IMR-90 (cell line): ENCODE measurements at regions of chr3 and their contacts with region 1.

Region 1: GRCh38 chr3:73086071-73086494 is 24.6 kb downstream of the EBLN2 start:
- DNase-seq: peak; percentile 43
- ATAC-seq: peak; percentile 92
- H3K4me3 ChIP-seq: no peak overlapping the region
- H3K27ac ChIP-seq: no peak overlapping the region
- H3K4me1 ChIP-seq: peaks cover 2% of the 10 kb centered on the region; the same call in 1 of the 2 replicates
- H3K27me3 ChIP-seq: peaks cover 5% of the 10 kb centered on the region; the same call in 1 of the 2 replicates
- CTCF ChIP-seq: peak; percentile 92
- POLR2A ChIP-seq: no peak
- RAD21 ChIP-seq: peak; percentile 94

Region 2: GRCh38 chr3:71710906-71711494 is 1375.1 kb before region 1 on chr3:
- CTCF ChIA-PET with region 1: no interaction called
- POLR2A ChIA-PET with region 1: no interaction called
- dilution Hi-C with region 1: no loop called
- in situ Hi-C with region 1: no loop called
- intact Hi-C with region 1: loop called (anchors 5 kb)
- DNase-seq: peak; percentile 66
- ATAC-seq: peak; percentile 92
- H3K4me3 ChIP-seq: no peak overlapping the region
- H3K27ac ChIP-seq: no peak overlapping the region
- H3K4me1 ChIP-seq: no peaks in the 10 kb centered on the region; the same call in 1 of the 2 replicates
- H3K27me3 ChIP-seq: peaks cover 19% of the 10 kb centered on the region
- CTCF ChIP-seq: peak; percentile 77
- POLR2A ChIP-seq: no peak
- RAD21 ChIP-seq: peak; percentile 76

Region 3: DNA sequence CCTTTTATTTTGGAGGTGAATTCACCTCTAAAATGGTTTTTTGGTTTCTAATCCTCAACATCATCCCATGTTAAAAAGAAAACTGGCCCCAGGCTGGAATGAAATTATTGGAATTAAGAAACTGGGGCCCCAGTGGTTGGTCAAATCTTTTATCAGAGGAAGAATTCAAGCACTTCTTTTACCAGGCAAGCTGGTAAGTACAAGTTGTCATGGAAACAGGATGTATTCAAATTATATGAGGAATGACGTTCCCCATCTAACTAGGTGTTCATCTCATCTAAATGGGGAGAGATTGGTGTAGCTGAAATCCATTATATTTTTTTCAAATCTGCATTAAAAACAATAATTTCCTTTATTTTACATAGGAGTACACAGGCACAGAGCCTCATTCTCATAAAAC is 1351.2 kb before region 1 on chr3:
- CTCF ChIA-PET with region 1: no interaction called
- POLR2A ChIA-PET with region 1: no interaction called
- dilution Hi-C with region 1: no loop called
- in situ Hi-C with region 1: no loop called
- intact Hi-C with region 1: loop called (anchors 5 kb)
- DNase-seq: no peak
- ATAC-seq: no peak
- H3K4me3 ChIP-seq: no peak overlapping the region
- H3K27ac ChIP-seq: no peak overlapping the region
- H3K4me1 ChIP-seq: no peaks in the 10 kb centered on the region
- H3K27me3 ChIP-seq: peaks cover 17% of the 10 kb centered on the region
- CTCF ChIP-seq: no peak
- POLR2A ChIP-seq: no peak
- RAD21 ChIP-seq: no peak

Region 4: DNA sequence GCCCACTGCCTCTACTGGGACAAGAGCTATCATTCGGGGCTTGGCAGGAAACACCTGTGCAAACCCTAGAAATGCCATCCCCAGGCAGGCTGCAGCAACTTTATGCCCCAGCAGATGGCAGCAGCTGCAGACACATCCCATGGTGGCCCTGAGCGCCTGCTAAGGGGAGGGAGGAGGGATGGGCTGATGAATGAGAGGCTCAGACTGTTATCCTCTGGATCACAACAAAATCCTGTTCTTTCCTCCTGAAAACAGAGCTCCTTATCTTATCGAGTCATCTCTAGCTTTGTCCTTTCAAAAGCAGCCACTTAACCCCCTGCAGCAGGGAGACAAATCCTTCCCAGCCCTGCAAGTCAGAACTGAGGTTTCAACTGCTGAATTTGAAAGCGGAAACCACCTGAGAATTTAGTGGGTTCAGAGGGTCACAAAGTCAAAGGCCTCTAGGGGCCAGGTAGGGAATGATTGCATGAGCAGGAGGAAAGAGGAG is 1210.6 kb before region 1 on chr3:
- CTCF ChIA-PET with region 1: no interaction called
- POLR2A ChIA-PET with region 1: no interaction called
- dilution Hi-C with region 1: no loop called
- in situ Hi-C with region 1: loop called (anchors 25 kb)
- intact Hi-C with region 1: loop called (anchors 1 kb)
- DNase-seq: peak; percentile 53
- ATAC-seq: peak; percentile 99
- H3K4me3 ChIP-seq: no peak overlapping the region
- H3K27ac ChIP-seq: no peak overlapping the region
- H3K4me1 ChIP-seq: no peaks in the 10 kb centered on the region
- H3K27me3 ChIP-seq: peaks cover 6% of the 10 kb centered on the region
- CTCF ChIP-seq: peak; percentile 81
- POLR2A ChIP-seq: 0 out of 2 replicates have a peak, but pooled peaks have one; percentile 27
- RAD21 ChIP-seq: peak; percentile 84

Region 5: GRCh38 chr3:71955240-71956068 is 1130.6 kb before region 1 on chr3:
- CTCF ChIA-PET with region 1: no interaction called
- POLR2A ChIA-PET with region 1: no interaction called
- dilution Hi-C with region 1: no loop called
- in situ Hi-C with region 1: no loop called
- intact Hi-C with region 1: loop called (anchors 5 kb)
- DNase-seq: peak; percentile 70
- ATAC-seq: peak; percentile 85
- H3K4me3 ChIP-seq: no peak overlapping the region
- H3K27ac ChIP-seq: no peak overlapping the region
- H3K4me1 ChIP-seq: no peaks in the 10 kb centered on the region
- H3K27me3 ChIP-seq: peaks cover 12% of the 10 kb centered on the region
- CTCF ChIP-seq: peak; percentile 74
- POLR2A ChIP-seq: no peak
- RAD21 ChIP-seq: peak; percentile 87

Region 6: GRCh38 chr3:72847751-72848702 is 238.1 kb before region 1 on chr3 and contains the start of gene SHQ1:
- CTCF ChIA-PET with region 1: interaction called, 10 read pairs
- POLR2A ChIA-PET with region 1: no interaction called
- dilution Hi-C with region 1: no loop called
- in situ Hi-C with region 1: no loop called
- intact Hi-C with region 1: loop called (anchors 1 kb)
- DNase-seq: peak; percentile 93
- ATAC-seq: peak; percentile 88
- H3K4me3 ChIP-seq: peak within 1 kb of the TSS; percentile 90
- H3K27ac ChIP-seq: peak within 1 kb of the TSS; percentile 65
- H3K4me1 ChIP-seq: no peaks in the 10 kb centered on the region; the same call in 1 of the 2 replicates
- H3K27me3 ChIP-seq: no peaks in the 10 kb centered on the region
- CTCF ChIP-seq: no peak
- POLR2A ChIP-seq: peak; percentile 31; the same call in 1 of the 2 replicates
- RAD21 ChIP-seq: no peak; the same call in 1 of the 2 replicates
- total RNA-seq, gene SHQ1: 19.4 and 28.6 TPM in 2 replicates

Region 7: DNA sequence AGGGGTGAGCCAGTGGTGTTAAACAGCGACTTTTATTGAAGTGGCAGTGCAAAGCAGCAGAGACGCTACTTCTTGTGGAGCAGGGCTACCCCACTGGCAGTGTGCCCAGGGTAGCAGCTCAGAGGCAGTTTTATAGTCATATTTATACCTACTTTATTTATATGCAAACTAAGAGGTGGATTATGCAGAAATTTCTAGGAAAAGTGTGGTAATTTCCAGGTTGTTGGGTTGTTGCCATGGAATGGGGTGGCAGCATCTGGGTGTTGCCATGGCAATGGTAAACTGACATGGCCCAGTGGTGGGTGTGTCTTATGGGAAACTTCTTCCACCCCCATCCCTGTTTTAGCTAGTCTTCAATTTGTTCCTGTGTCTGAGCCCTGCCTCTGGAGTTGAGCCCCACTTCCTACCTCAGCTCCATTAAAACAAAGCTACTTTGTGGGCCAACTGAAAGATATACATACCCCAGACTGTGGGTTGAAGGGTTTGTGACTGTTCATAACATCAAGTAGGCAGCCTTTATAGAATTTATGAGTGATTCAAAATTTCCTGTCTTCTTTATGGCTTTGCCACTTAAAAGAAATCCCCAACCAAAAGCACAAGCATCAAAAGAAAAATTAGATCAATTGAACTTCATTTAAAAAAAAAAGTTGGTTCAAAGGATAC is 35.7 kb after region 1 on chr3:
- CTCF ChIA-PET with region 1: no interaction called
- POLR2A ChIA-PET with region 1: no interaction called
- dilution Hi-C with region 1: no loop called
- in situ Hi-C with region 1: no loop called
- intact Hi-C with region 1: no loop called
- DNase-seq: no peak
- ATAC-seq: no peak
- H3K4me3 ChIP-seq: no peak overlapping the region
- H3K27ac ChIP-seq: no peak overlapping the region
- H3K4me1 ChIP-seq: no peaks in the 10 kb centered on the region
- H3K27me3 ChIP-seq: peaks cover 5% of the 10 kb centered on the region; the same call in 1 of the 2 replicates
- CTCF ChIP-seq: no peak
- POLR2A ChIP-seq: no peak
- RAD21 ChIP-seq: no peak